Upper lobe of right lung (tissue), 1 donor: ENCODE measurements at regions of chr22 and their contacts with region 1.

Region 1: DNA sequence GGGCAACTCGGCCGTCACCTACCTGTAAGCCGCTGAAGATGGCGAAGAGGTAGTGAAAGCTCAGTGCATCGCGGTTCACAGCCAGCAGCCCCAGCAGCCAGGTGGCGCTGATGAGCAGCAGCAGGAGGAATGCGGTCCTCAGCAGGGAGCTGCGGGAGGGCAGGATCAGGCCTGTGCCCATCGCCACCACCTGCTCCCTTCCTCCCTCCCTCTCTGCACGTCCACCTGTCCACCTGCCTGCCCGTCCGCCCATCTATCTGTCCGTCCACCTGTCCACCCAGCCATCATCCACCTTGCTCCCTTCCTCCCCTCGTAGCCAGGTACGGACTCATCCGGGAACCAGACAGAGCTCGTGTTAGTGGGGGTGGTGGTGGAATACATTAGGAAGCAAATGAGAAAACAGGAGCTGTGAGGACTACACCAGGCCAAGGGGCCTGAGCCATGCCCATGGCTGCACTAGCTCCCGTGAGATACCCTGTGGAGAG is 32.2 kb downstream of the TRMU start:
- DNase-seq: peak; percentile 89
- ATAC-seq: peak; percentile 82
- H3K4me3 ChIP-seq: no peak overlapping the region
- H3K27ac ChIP-seq: no peak overlapping the region
- H3K4me1 ChIP-seq: no peaks in the 10 kb centered on the region
- H3K27me3 ChIP-seq: no peaks in the 10 kb centered on the region
- CTCF ChIP-seq: peak; percentile 84

Region 2: GRCh38 chr22:46501701-46502100 is 134.0 kb after region 1 on chr22:
- intact Hi-C with region 1: no loop called
- DNase-seq: no peak
- ATAC-seq: no peak
- H3K4me3 ChIP-seq: no peak overlapping the region
- H3K27ac ChIP-seq: no peak overlapping the region
- H3K4me1 ChIP-seq: no peaks in the 10 kb centered on the region
- H3K27me3 ChIP-seq: peaks cover 12% of the 10 kb centered on the region
- CTCF ChIP-seq: no peak

Region 3: DNA sequence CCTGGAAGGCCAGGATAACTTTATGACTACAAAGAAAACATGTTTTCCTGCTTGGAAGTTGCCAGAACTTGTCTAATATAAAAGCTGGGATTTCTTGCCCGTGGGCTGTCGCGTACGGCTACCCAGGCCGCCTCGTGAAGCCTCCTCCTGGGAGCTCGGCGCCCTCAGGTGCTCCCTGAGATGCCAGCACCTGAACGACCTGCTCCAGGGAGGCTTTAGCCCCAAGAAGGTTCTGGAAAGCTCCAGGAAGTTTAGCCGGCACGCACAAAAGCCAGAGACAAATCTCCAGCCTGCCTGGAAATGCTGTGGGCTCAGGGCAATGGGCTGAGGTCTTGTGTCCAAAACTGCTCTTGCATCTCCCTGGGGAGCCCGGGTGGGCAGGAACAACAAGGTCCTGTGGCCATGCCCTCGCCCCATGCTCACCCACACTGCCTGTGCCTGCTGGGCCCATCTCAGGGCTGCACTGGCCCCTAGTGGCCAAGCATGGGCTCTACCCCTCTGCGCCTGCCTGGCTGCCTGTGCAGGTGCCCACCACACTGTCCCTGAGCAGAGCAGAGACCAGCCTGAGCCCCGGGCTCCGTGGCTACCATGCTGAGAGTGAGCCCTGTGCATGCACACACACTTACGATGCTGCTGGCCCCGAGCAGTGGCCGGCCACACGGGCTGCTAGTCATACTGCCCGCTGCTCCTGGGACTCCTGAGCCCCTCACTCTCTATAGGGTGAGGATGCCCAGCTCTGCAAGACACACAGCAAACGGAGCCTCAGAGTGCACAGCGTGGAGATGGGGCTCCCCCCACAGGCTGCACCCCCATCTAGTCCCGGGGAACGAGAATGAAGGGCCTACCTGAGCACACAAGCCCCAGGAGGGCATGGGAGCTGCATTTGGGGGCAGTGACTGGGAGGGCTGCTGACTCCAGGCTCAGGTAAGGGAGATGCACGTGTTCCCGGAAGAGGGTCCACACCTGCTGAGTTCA is 174.5 kb after region 1 on chr22:
- intact Hi-C with region 1: loop called (anchors 5 kb)
- DNase-seq: peak; percentile 90
- ATAC-seq: peak; percentile 82
- H3K4me3 ChIP-seq: no peak overlapping the region
- H3K27ac ChIP-seq: no peak overlapping the region
- H3K4me1 ChIP-seq: peaks cover 43% of the 10 kb centered on the region
- H3K27me3 ChIP-seq: peaks cover 19% of the 10 kb centered on the region
- CTCF ChIP-seq: peak; percentile 92